Left lung (tissue), 14 donors: ENCODE measurements at regions of chr18 and their contacts with region 1.

Region 1: GRCh38 chr18:3447895-3448837 is 1.8 kb upstream of the TGIF1 start:
- DNase-seq: peak; percentile 96 to 99 (median 98)
- ATAC-seq: peak; percentile 75
- H3K4me3 ChIP-seq: peak overlapping the region; percentile 72 to 87
- H3K27ac ChIP-seq: peak overlapping the region; percentile 95 to 99
- H3K4me1 ChIP-seq: peaks cover 16 to 32% of the 10 kb centered on the region in 2 donors
- H3K27me3 ChIP-seq: no peaks in the 10 kb centered on the region
- CTCF ChIP-seq: no peak

Region 2: GRCh38 chr18:3281456-3282400 is 166.4 kb before region 1 on chr18:
- intact Hi-C with region 1: loop called in 1 of 2 experiments (anchors 10 kb)
- DNase-seq: peak in 2 of 4 donors; percentile 75 to 77
- ATAC-seq: peak; percentile 92
- H3K4me3 ChIP-seq: no peak overlapping the region
- H3K27ac ChIP-seq: peak overlapping the region in 1 of 2 donors; percentile 40
- H3K4me1 ChIP-seq: peaks cover 0 to 19% of the 10 kb centered on the region in 2 donors
- H3K27me3 ChIP-seq: no peaks in the 10 kb centered on the region
- CTCF ChIP-seq: peak; percentile 54 to 59

Region 3: GRCh38 chr18:3593904-3594661 is 145.9 kb after region 1 on chr18:
- intact Hi-C with region 1: loop called in 1 of 2 experiments (anchors 5 kb)
- DNase-seq: peak in 3 of 4 donors; percentile 89 to 96 (median 95)
- ATAC-seq: peak; percentile 86
- H3K4me3 ChIP-seq: peak overlapping the region; percentile 32 to 52
- H3K27ac ChIP-seq: peak overlapping the region; percentile 97
- H3K4me1 ChIP-seq: peaks cover 36 to 59% of the 10 kb centered on the region in 2 donors
- H3K27me3 ChIP-seq: no peaks in the 10 kb centered on the region
- CTCF ChIP-seq: peak; percentile 76 to 82

Region 4: DNA sequence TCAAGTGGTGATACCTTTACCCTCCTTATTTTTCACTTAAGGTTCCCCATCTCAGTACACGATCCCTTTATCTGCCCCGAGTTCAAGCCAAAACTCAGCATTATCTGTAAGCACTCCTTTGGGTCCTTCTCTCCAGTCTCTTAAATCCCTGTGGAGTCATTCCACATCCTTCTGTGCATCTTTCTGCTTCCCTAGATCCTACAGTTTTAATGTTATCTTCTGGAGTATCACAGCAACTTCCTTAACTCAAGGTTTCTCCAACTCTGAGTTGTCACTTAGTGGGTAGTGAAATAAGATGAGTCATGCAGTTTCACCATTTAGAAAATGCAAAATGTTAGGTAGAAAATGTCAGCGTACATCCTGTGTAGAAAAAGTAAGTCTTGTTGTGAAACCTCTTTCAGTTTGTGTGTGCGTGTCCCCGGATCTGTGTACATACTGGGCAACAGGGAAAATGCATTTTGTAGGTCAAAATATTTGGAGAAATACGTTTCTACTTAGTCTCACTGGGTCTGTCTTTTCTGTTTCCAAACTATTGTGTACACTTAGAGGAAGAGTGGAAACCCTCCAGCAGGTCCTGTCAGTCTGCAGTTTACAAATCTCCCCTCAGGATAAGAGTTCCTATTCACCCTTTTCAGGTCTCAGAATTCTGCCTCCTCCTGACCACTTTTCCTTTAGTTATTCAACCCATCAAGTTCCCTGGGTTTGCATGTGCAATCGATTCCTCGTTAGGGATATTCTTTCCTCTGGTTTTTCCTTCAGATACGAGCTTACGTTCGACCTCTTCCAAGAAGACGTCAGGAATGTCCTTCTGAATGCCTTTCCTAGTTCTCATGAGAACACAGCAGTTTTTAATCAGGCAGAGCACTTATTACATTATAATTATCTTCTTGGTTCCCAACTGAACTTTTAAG is 156.6 kb after region 1 on chr18:
- intact Hi-C with region 1: loop called in 1 of 2 experiments (anchors 5 kb)
- DNase-seq: peak in 2 of 4 donors; percentile 56 to 59
- ATAC-seq: peak; percentile 47
- H3K4me3 ChIP-seq: peak overlapping the region in 1 of 2 donors; percentile 18
- H3K27ac ChIP-seq: peak overlapping the region; percentile 94 to 95
- H3K4me1 ChIP-seq: peaks cover 19 to 49% of the 10 kb centered on the region in 2 donors
- H3K27me3 ChIP-seq: no peaks in the 10 kb centered on the region
- CTCF ChIP-seq: no peak